ENCODE measurements at regions of chr17 and their contacts with region 1.

Region 1: GRCh38 chr17:18260332-18261144 is at the start of gene MIEF2:
- H3K4me3 ChIP-seq: peak within 1 kb of the TSS; percentile 87
- H3K27ac ChIP-seq: peak within 1 kb of the TSS; percentile 92
- H3K4me1 ChIP-seq: peaks cover 12% of the 10 kb centered on the region
- CTCF ChIP-seq: no peak

Region 2: DNA sequence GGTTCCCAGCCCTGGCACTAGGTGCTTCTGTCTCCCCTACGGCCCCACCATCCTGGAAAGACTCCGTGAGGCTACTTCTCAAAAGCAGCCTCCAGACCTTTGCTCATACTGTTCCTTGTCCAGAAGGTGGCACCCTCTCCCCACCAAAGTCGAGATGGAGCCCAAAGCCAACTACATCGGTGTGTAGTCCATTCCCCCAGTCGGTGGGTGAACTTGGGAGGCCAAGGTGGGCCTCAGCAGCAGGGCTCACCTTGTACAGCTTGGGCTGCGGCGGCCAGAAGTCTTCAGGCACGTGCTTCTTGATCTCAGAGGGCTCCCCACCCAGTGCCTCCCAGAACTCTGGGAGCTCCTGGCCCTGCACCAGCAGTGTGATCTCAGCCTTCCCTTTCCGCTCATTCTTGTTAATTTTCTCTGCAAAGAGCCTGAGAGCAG is 12.2 kb before region 1 on chr17:
- CTCF ChIA-PET with region 1: interaction called, 5 read pairs
- POLR2A ChIA-PET with region 1: interaction called, 12 read pairs
- H3K4me3 ChIP-seq: no peak overlapping the region
- H3K27ac ChIP-seq: no peak overlapping the region
- H3K4me1 ChIP-seq: no peaks in the 10 kb centered on the region
- CTCF ChIP-seq: peak; percentile 68

Measured in HEK293 (cell line).